ENCODE measurements at regions of chr15 and their contacts with region 1.

Region 1: DNA sequence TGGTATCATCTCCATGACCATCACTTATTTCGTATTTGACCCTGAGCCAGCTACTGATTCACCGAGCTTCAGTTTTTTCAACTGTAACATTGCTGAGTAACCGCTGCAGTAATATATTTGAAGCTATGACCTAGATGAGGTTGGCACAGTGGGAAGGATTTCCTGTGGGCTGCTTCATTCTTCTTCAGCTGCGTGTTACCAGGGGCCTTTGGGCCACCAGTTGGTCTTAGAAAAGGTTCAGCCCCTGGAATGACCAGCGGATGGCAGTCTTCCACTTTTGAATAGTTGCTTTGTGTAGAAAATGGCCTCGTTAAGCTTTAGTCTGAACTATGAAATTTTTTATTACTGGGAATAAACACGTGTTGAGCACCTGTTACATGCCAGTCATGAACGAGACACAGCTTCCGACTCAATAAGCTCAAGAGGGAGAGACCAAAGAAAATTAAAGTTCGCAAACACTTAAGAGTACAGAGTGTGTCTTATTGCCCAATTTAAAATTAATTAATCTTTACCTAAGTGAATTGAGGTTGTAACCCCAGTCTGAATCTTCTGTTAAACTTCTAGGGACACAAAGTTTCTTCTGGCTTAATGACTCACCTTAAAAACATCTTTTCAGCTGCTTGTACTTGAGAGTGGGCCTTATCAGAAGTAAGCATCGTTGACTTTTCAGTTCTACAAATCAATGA is 57.6 kb upstream of the NR2E3 start:
- DNase-seq: peak; percentile 92
- H3K4me3 ChIP-seq: no peak overlapping the region
- H3K27ac ChIP-seq: peak overlapping the region; percentile 54
- H3K4me1 ChIP-seq: peaks cover 47% of the 10 kb centered on the region
- H3K27me3 ChIP-seq: no peaks in the 10 kb centered on the region
- CTCF ChIP-seq: peak; percentile 71 to 83
- POLR2A ChIP-seq: no peak

Region 2: GRCh38 chr15:71669688-71670087 is 83.1 kb before region 1 on chr15:
- CTCF ChIA-PET with region 1: no interaction called
- POLR2A ChIA-PET with region 1: no interaction called
- dilution Hi-C with region 1: no loop called
- intact Hi-C with region 1: no loop called
- DNase-seq: no peak
- H3K4me3 ChIP-seq: no peak overlapping the region
- H3K27ac ChIP-seq: no peak overlapping the region
- H3K4me1 ChIP-seq: no peaks in the 10 kb centered on the region
- H3K27me3 ChIP-seq: no peaks in the 10 kb centered on the region
- CTCF ChIP-seq: no peak
- POLR2A ChIP-seq: no peak

Region 3: DNA sequence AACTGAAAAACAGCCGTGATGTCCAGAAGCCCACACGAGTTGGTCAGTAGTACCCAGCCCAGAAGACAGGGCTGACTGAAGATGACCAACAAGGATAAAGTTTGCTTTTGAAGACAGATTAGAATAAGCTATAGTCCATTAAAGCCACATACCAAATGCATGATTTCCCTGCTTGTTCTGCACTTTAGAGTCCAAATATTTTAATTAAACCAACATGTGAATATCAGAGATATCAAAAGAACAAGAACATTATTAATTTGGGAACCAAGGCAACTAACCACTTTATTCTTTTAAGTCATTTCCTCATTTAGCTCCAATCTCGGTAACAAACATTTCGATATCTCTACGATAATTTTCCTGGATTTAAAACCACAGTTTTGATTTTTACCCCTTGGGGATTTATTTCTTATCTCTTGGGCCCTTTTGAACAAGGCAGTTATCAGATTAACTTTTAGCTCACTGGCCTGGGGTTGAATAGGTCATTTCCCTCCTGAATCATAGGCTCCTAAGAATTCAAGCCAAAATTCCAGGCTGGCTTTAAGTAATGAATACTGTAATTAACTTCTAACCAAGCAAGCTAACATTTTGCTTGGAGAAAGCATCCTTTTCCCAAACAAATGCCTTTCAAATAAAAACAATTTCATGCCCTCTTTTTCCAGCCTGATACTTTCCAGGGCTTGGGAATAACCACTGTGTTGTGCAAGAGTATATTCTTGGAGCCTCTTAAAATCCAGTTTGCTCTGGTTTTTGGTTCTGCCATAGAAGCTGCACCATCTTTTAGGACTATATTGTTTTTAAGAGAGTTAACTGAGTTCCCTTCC is 45.3 kb before region 1 on chr15:
- CTCF ChIA-PET with region 1: no interaction called
- POLR2A ChIA-PET with region 1: no interaction called
- dilution Hi-C with region 1: no loop called
- intact Hi-C with region 1: no loop called
- DNase-seq: peak; percentile 41
- H3K4me3 ChIP-seq: no peak overlapping the region
- H3K27ac ChIP-seq: no peak overlapping the region
- H3K4me1 ChIP-seq: peaks cover 8% of the 10 kb centered on the region
- H3K27me3 ChIP-seq: peaks cover 0 to 2% of the 10 kb centered on the region in 2 experiments
- CTCF ChIP-seq: no peak
- POLR2A ChIP-seq: no peak

Region 4: GRCh38 chr15:71780115-71780976 is 27.6 kb after region 1 on chr15:
- CTCF ChIA-PET with region 1: interaction called, 81 read pairs
- POLR2A ChIA-PET with region 1: no interaction called
- dilution Hi-C with region 1: no loop called
- intact Hi-C with region 1: loop called (anchors 1 kb)
- DNase-seq: peak; percentile 84
- H3K4me3 ChIP-seq: peak overlapping the region in 1 of 3 experiments; percentile 51
- H3K27ac ChIP-seq: peak overlapping the region; percentile 86
- H3K4me1 ChIP-seq: peaks cover 19% of the 10 kb centered on the region
- H3K27me3 ChIP-seq: no peaks in the 10 kb centered on the region
- CTCF ChIP-seq: peak; percentile 76 to 77
- POLR2A ChIP-seq: no peak

Region 5: DNA sequence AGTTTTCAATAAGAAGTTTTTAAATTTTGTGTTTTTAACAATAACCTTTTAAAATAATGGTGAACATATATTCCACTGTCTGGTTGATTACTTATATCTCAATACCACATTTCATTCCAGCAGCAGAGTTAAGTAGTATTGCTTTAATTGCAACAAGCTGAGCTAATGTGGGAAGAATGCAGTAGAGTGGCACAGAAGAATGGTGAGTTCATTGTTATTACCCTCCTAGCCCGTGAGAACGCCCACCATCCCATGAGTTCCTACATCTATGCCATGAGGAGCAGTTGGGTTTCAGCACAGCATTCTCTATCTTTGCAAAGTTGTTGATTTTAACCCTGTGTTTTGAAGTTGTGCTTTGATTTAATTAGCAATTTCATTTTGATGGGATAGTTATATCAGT is 39.8 kb after region 1 on chr15:
- CTCF ChIA-PET with region 1: interaction called, 50 read pairs
- POLR2A ChIA-PET with region 1: interaction called, 5 read pairs
- dilution Hi-C with region 1: no loop called
- intact Hi-C with region 1: no loop called
- DNase-seq: peak; percentile 64
- H3K4me3 ChIP-seq: no peak overlapping the region
- H3K27ac ChIP-seq: peak overlapping the region; percentile 74
- H3K4me1 ChIP-seq: peaks cover 45% of the 10 kb centered on the region
- H3K27me3 ChIP-seq: no peaks in the 10 kb centered on the region
- CTCF ChIP-seq: no peak
- POLR2A ChIP-seq: no peak

Region 6: DNA sequence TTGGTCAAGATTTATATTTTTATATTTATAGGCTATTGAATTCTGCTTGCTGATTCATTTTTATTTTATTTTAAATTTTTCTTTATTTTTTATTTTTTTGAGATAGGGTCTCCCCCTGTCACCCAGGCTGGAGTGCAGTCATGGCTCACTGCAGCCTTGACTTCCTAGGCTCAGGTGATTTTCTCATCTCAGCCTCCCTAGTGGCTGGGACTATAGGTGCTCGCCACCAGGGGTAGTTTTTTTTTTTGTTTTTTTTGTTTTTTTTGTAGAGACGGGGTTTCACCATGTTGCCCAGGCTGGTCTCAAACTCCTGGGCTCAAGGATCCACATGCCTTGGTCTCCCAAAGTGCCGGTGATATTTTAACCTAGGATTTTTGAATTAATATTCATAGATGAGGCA is 88.8 kb after region 1 on chr15:
- CTCF ChIA-PET with region 1: interaction called, 12 read pairs
- POLR2A ChIA-PET with region 1: no interaction called
- dilution Hi-C with region 1: no loop called
- intact Hi-C with region 1: no loop called
- DNase-seq: no peak
- H3K4me3 ChIP-seq: no peak overlapping the region
- H3K27ac ChIP-seq: no peak overlapping the region
- H3K4me1 ChIP-seq: peaks cover 27% of the 10 kb centered on the region
- H3K27me3 ChIP-seq: no peaks in the 10 kb centered on the region
- CTCF ChIP-seq: no peak
- POLR2A ChIP-seq: no peak

Region 7: DNA sequence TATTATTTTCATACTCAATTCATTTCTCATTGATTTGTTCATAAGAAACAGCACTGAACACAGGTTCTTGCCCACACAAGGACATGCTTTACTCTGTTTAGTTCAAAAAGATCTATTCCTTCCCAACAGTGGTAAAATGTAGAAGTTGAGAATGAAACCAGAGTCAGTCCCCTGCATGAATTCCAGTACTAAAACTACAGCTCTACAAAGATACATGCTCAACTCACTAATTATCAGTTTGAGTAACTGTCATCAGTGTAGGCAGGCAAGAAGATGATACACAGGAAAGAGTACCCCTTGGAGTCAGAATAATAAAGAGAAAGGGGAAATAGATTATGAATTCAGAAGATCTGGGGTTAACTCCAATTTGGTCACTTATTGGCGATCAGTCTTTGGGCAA is 100.8 kb after region 1 on chr15:
- CTCF ChIA-PET with region 1: interaction called, 12 read pairs
- POLR2A ChIA-PET with region 1: no interaction called
- dilution Hi-C with region 1: no loop called
- intact Hi-C with region 1: loop called (anchors 5 kb)
- DNase-seq: no peak
- H3K4me3 ChIP-seq: no peak overlapping the region
- H3K27ac ChIP-seq: no peak overlapping the region
- H3K4me1 ChIP-seq: no peaks in the 10 kb centered on the region
- H3K27me3 ChIP-seq: no peaks in the 10 kb centered on the region
- CTCF ChIP-seq: no peak
- POLR2A ChIP-seq: no peak